CD4-positive, alpha-beta memory T cell (primary cell): ENCODE measurements at regions of chr9 and their contacts with region 1.

Region 1: DNA sequence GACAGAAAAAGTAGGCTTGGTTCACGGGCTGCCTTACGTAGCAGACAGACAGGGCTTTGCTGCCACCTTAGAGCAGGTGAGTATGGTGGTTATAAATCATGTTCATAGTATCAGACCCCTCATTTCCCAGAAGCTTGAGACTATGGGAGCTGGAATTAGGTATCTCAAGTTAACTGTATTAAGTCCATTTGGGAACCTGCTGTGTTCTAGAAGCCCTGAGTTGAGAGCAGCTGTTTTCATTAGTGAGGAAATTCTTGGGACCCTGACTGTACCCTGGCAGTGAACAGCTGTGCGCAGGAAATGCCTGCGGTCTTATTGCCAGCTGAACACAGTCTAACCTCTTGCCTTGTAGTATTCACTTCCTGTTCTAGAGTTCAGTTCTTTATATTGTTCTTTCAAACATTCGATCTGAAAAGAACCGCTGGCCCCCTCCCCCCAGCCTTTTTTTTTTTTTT is 29.8 kb downstream of the UGCG start:
- DNase-seq: peak; percentile 71 to 79 (median 78)
- H3K4me3 ChIP-seq: no peak overlapping the region
- H3K4me3 Mint-ChIP-seq: peak overlapping the region; percentile 45 to 85 (median 79)
- H3K27ac ChIP-seq: peak overlapping the region; percentile 24
- H3K27ac Mint-ChIP-seq: peak overlapping the region; percentile 63 to 95 (median 86)
- H3K4me1 ChIP-seq: peaks cover 50% of the 10 kb centered on the region
- H3K4me1 Mint-ChIP-seq: peaks cover 26 to 50% (median 36%) of the 10 kb centered on the region in 4 donors
- H3K27me3 ChIP-seq: no peaks in the 10 kb centered on the region
- H3K27me3 Mint-ChIP-seq: no peaks in the 10 kb centered on the region

Region 2: GRCh38 chr9:111759762-111760639 is 166.4 kb before region 1 on chr9:
- CTCF ChIA-PET with region 1: interaction called, 4 read pairs
- POLR2A ChIA-PET with region 1: no interaction called
- intact Hi-C with region 1: loop called (anchors 5 kb)
- DNase-seq: peak; percentile 56 to 70 (median 68)
- H3K4me3 ChIP-seq: no peak overlapping the region
- H3K4me3 Mint-ChIP-seq: no peak overlapping the region
- H3K27ac ChIP-seq: no peak overlapping the region
- H3K27ac Mint-ChIP-seq: no peak overlapping the region
- H3K4me1 ChIP-seq: no peaks in the 10 kb centered on the region
- H3K4me1 Mint-ChIP-seq: peaks cover 0 to 4% (median 2%) of the 10 kb centered on the region in 4 donors
- H3K27me3 ChIP-seq: no peaks in the 10 kb centered on the region
- H3K27me3 Mint-ChIP-seq: no peaks in the 10 kb centered on the region

Region 3: DNA sequence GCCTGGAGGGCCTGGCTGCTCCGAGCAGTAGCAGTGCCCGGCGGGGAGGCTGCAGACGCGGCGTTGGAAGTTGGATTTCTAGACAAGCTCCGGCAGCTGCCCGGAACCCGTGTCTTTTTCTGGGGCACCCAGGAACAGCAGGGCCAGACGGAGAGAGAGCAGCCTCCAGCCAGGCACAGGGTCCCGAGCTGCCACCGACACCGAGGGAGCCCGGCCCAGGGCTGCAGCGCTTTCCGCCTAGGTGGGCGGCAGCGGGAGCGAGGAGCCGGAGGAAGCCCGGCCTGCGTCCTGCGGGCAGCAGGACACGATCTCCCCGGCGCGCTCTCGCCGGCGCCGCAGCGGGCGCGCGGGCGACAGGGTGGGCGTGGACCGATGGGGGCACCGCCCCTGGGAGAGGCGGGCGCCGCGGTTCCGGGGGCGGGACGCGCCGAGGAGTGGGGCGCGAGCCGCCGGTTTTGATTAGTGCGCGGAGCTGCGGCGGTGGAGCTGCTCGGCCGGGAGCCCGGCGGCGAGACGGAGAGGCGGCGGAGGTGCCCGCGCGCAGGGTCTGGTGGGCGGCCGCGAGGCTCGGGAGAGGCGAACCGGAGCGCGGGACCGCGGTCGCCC is 30.0 kb before region 1 on chr9 and contains the start of gene UGCG:
- CTCF ChIA-PET with region 1: interaction called, 4 read pairs
- POLR2A ChIA-PET with region 1: interaction called, 92 read pairs
- intact Hi-C with region 1: loop called (anchors 1 kb)
- DNase-seq: peak; percentile 84 to 92 (median 89)
- H3K4me3 ChIP-seq: peak within 1 kb of the TSS; percentile 87 to 97
- H3K4me3 Mint-ChIP-seq: peak within 1 kb of the TSS; percentile 90 to 96 (median 93)
- H3K27ac ChIP-seq: peak within 1 kb of the TSS; percentile 70
- H3K27ac Mint-ChIP-seq: peak within 1 kb of the TSS; percentile 91 to 97 (median 95)
- H3K4me1 ChIP-seq: peaks cover 58% of the 10 kb centered on the region
- H3K4me1 Mint-ChIP-seq: peaks cover 23 to 32% (median 31%) of the 10 kb centered on the region in 4 donors
- H3K27me3 ChIP-seq: no peaks in the 10 kb centered on the region
- H3K27me3 Mint-ChIP-seq: no peaks in the 10 kb centered on the region
- total RNA-seq, gene UGCG: 26.3 to 29.7 TPM

Region 4: DNA sequence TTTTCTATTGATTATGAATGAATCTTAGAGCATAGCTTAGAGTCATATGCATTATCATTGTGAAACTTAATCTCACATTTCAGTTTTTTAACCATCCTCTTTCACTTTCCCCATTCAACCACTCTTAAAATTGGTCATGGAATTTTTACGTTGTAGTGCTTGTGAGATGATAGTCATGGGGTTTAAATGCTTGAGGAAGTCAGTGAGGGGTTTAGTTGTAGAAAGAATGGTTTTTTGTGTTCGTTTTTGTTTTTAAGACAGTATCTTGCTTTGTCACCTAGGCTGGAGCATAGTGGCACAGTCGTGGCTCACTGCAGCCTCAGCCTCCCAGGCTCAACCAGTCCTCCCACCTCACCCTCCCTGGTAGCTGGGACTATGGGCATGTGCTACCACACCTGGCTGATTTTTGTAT is 10.2 kb before region 1 on chr9:
- CTCF ChIA-PET with region 1: interaction called, 8 read pairs
- POLR2A ChIA-PET with region 1: interaction called, 11 read pairs
- intact Hi-C with region 1: loop called (anchors 1 kb)
- DNase-seq: no peak
- H3K4me3 ChIP-seq: no peak overlapping the region
- H3K4me3 Mint-ChIP-seq: peak overlapping the region in 7 of 8 donors; percentile 60 to 84 (median 77)
- H3K27ac ChIP-seq: no peak overlapping the region
- H3K27ac Mint-ChIP-seq: peak overlapping the region in 5 of 7 donors; percentile 57 to 86 (median 77)
- H3K4me1 ChIP-seq: peaks cover 52% of the 10 kb centered on the region
- H3K4me1 Mint-ChIP-seq: peaks cover 41 to 71% (median 55%) of the 10 kb centered on the region in 4 donors
- H3K27me3 ChIP-seq: no peaks in the 10 kb centered on the region
- H3K27me3 Mint-ChIP-seq: no peaks in the 10 kb centered on the region

Region 5: DNA sequence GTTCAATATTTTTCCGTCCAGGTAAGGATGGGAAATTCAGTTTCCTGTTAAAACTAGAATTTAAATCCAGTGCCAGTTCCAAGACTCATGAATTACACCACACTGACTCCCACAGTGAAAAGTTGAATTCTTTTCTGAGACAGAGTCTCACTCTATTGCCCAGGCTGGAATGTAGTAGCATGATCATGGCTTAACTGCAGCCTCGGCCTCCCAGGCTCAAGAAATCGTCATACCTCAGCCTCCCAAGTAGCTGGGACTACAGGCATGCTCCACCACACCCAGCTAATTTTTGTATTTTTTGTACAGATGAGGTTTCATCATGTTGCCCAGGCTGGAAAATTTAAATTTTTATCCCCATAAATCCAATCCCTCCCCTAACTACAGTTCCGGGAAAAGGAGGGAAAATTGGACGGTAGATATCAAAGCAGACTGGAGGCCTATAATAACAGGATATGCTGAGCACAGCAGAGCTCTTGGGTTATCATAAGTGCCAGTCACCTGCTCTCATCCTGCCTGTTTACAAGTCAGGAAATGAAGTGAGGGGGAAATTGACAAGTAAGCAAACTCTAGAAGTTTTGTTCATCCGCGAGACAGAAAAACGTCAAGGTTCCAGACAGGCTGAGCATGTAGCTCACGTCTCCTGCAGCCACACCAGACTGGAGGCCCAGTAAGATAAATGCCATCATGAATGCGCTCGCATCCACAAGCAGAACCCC is 75.8 kb after region 1 on chr9:
- CTCF ChIA-PET with region 1: no interaction called
- POLR2A ChIA-PET with region 1: interaction called, 10 read pairs
- intact Hi-C with region 1: no loop called
- DNase-seq: peak in 4 of 5 donors; percentile 31 to 58 (median 46)
- H3K4me3 ChIP-seq: no peak overlapping the region
- H3K4me3 Mint-ChIP-seq: peak overlapping the region in 7 of 8 donors; percentile 29 to 70 (median 55)
- H3K27ac ChIP-seq: no peak overlapping the region
- H3K27ac Mint-ChIP-seq: peak overlapping the region; percentile 50 to 95 (median 81)
- H3K4me1 ChIP-seq: peaks cover 35% of the 10 kb centered on the region
- H3K4me1 Mint-ChIP-seq: peaks cover 14 to 34% (median 27%) of the 10 kb centered on the region in 4 donors
- H3K27me3 ChIP-seq: no peaks in the 10 kb centered on the region
- H3K27me3 Mint-ChIP-seq: no peaks in the 10 kb centered on the region

Region 6: GRCh38 chr9:112119225-112120029 is 193.0 kb after region 1 on chr9:
- CTCF ChIA-PET with region 1: no interaction called
- POLR2A ChIA-PET with region 1: no interaction called
- intact Hi-C with region 1: no loop called
- DNase-seq: no peak
- H3K4me3 ChIP-seq: no peak overlapping the region
- H3K4me3 Mint-ChIP-seq: no peak overlapping the region
- H3K27ac ChIP-seq: no peak overlapping the region
- H3K27ac Mint-ChIP-seq: peak overlapping the region in 3 of 7 donors; percentile 3 to 64 (median 55)
- H3K4me1 ChIP-seq: no peaks in the 10 kb centered on the region
- H3K4me1 Mint-ChIP-seq: peaks cover 0 to 1% (median 0%) of the 10 kb centered on the region in 4 donors
- H3K27me3 ChIP-seq: no peaks in the 10 kb centered on the region
- H3K27me3 Mint-ChIP-seq: no peaks in the 10 kb centered on the region

Region 7: DNA sequence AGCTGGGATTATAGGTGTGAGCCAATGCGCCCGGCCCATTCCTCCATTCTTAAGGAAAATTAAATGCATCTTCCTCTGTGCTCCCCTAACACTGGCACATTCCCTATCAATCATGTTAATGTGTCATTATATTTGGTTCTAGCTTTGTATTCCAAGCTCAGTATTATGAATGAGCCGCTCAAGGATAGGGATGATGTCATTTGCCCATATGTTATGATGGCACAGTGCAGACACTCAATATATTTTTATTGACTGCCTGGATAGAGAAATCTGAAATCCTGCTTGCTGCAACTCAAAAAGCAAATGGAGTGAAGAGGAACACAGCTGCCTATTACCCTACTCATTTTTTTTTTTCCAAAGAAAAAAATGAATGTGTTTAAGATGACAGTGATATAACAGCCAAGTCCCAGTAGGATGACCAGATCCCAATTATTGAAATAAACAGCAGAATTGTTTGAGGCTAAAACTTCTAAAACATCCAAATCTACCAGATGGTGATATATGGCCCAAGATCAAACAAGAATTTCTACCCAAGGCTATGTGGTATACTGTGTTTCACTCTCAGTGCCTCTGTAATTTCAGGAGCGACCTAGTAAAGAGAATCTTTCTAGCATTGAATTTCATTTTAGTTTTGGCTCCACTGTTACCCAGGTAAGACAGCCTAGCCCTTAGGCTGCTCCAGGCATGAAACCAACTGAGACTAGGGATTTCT is 232.4 kb after region 1 on chr9:
- CTCF ChIA-PET with region 1: no interaction called
- POLR2A ChIA-PET with region 1: no interaction called
- intact Hi-C with region 1: no loop called
- DNase-seq: no peak
- H3K4me3 ChIP-seq: no peak overlapping the region
- H3K4me3 Mint-ChIP-seq: no peak overlapping the region
- H3K27ac ChIP-seq: no peak overlapping the region
- H3K27ac Mint-ChIP-seq: no peak overlapping the region
- H3K4me1 ChIP-seq: no peaks in the 10 kb centered on the region
- H3K4me1 Mint-ChIP-seq: peaks cover 0 to 5% (median 2%) of the 10 kb centered on the region in 4 donors
- H3K27me3 ChIP-seq: no peaks in the 10 kb centered on the region
- H3K27me3 Mint-ChIP-seq: no peaks in the 10 kb centered on the region

Region 8: GRCh38 chr9:112750111-112750767 is 823.8 kb after region 1 on chr9 and contains the start of gene SNX30:
- CTCF ChIA-PET with region 1: no interaction called
- POLR2A ChIA-PET with region 1: no interaction called
- intact Hi-C with region 1: loop called (anchors 10 kb)
- DNase-seq: peak; percentile 76 to 84 (median 80)
- H3K4me3 ChIP-seq: peak within 1 kb of the TSS; percentile 57 to 77
- H3K4me3 Mint-ChIP-seq: peak within 1 kb of the TSS; percentile 85 to 93 (median 90)
- H3K27ac ChIP-seq: peak within 1 kb of the TSS; percentile 67
- H3K27ac Mint-ChIP-seq: peak within 1 kb of the TSS; percentile 87 to 97 (median 96)
- H3K4me1 ChIP-seq: peaks cover 62% of the 10 kb centered on the region
- H3K4me1 Mint-ChIP-seq: peaks cover 44 to 70% (median 56%) of the 10 kb centered on the region in 4 donors
- H3K27me3 ChIP-seq: no peaks in the 10 kb centered on the region
- H3K27me3 Mint-ChIP-seq: no peaks in the 10 kb centered on the region
- total RNA-seq, gene SNX30: 10.8 to 10.9 TPM